ENCODE measurements at regions of chr7 and their contacts with region 1.

Region 1: DNA sequence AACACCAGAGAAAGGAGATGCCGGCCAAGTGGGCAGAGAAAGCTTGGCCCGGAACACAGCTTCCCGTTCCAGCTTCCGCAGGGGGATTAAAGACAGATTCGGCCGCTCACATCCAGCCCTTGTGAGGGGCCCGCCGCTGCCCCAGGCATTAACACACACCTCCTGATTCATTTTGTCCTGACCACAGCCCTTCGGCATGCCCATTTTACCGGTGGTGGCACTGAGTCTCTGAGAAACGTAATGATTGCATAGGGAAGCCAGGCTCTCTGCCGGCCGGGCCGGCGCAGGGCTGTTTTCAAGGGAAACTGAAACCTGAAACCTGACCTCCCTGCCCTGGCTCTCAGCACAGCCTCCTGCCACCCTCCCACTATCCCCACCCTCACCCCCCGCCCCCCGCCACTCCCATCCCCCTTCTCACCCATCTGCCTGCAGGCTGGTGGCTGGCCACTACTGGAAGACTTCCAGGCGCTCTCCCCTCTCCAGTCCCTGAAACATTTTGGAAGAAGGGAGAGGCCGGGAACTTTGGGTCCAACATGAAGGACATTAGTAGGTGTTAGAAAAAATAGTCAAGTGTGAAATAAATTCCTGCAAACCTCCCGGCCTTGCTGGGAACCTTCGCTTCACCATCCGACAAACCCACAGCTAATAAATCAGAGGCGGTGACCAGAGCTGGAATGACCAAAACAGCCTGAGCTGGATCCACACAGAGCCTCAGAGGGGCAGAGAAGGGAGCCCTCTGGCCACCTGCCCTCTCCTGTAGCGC is 83.5 kb upstream of the CUX1 start:
- DNase-seq: no peak
- ATAC-seq: no peak
- H3K4me3 ChIP-seq: no peak overlapping the region
- H3K27ac ChIP-seq: peak overlapping the region in 1 of 2 experiments; percentile 57; a peak in 3 of 6 replicates
- H3K4me1 ChIP-seq: peaks cover 6% of the 10 kb centered on the region; the same call in 2 of the 3 replicates
- CTCF ChIP-seq: no peak
- EP300 ChIP-seq: no peak
- POLR2A ChIP-seq: no peak
- RAD21 ChIP-seq: no peak

Region 2: GRCh38 chr7:101717628-101718357 is 16.1 kb before region 1 on chr7:
- CTCF ChIA-PET with region 1: interaction called, 11 read pairs
- POLR2A ChIA-PET with region 1: no interaction called
- DNase-seq: no peak
- ATAC-seq: peak in 1 of 2 experiments; percentile 36; a peak in 3 of 6 replicates
- H3K4me3 ChIP-seq: no peak overlapping the region
- H3K27ac ChIP-seq: peak overlapping the region in 1 of 2 experiments; percentile 51; a peak in 3 of 6 replicates
- H3K4me1 ChIP-seq: no peaks in the 10 kb centered on the region
- CTCF ChIP-seq: no peak
- EP300 ChIP-seq: no peak
- POLR2A ChIP-seq: no peak
- RAD21 ChIP-seq: no peak

Region 3: GRCh38 chr7:101803197-101804087 is 69.5 kb after region 1 on chr7:
- CTCF ChIA-PET with region 1: no interaction called
- POLR2A ChIA-PET with region 1: no interaction called
- DNase-seq: no peak
- ATAC-seq: no peak
- H3K4me3 ChIP-seq: no peak overlapping the region
- H3K27ac ChIP-seq: no peak overlapping the region
- H3K4me1 ChIP-seq: 0 out of 3 replicates have a peak, but pooled peaks cover 4% of the 10 kb centered on the region
- CTCF ChIP-seq: no peak
- EP300 ChIP-seq: no peak
- POLR2A ChIP-seq: no peak
- RAD21 ChIP-seq: no peak

Region 4: DNA sequence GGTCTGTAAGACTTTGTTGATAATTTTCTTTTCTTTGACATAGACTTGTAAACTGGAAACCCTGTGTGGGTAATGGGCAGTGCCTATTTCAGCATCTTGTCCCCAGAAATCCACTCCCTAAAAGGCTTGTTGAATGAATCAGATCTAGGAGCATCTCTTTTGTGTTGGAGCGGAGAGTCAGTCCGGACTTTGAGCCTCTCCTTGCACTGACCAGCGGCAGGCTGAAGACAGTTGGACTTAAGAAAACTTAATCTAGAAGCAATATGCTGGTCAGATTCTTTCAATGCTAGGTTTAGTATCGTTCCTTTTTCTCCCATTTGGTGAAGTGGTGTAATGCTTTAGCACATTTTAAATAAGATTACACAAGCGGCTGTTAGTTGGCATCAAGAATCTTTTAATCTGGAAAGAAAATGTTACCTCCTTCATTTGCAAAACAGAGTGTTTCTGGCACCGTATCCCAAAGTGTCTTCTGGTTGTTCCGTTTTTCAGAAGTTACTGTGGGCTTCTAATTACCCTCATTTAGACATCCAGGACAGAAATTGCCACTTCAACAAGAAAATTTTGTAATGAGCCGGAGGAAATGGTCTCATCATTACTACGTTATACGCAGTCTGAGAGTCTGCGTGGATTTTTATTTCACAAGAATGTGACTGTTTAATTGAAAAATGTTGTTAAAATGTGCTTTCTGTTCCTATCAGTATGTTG is 158.2 kb after region 1 on chr7:
- CTCF ChIA-PET with region 1: no interaction called
- POLR2A ChIA-PET with region 1: no interaction called
- DNase-seq: peak in 1 of 2 experiments; percentile 74
- ATAC-seq: peak; percentile 69 to 77
- H3K4me3 ChIP-seq: no peak overlapping the region
- H3K27ac ChIP-seq: peak overlapping the region; percentile 38 to 93
- H3K4me1 ChIP-seq: peaks cover 52% of the 10 kb centered on the region
- CTCF ChIP-seq: no peak
- EP300 ChIP-seq: no peak
- POLR2A ChIP-seq: no peak
- RAD21 ChIP-seq: no peak

Region 5: DNA sequence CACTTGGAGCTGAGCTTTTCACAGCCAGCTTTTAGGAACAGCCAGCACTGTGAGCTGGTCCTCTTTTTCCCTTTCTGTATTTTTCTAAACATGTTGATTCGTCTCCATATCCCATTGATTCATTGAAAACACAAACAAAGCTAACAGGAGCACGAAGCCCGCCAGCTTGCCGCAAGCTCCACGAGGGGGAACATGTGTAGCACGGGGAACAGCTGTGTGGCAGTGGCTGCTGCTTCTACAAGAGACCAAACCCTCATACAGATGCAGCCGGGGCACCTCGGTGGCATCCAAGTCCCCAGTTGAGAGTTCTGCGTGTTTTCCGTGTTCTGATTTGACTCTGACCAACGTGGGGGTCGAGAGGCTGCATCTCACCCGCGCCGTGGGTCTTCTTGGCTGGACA is 472.0 kb after region 1 on chr7:
- CTCF ChIA-PET with region 1: no interaction called
- POLR2A ChIA-PET with region 1: no interaction called
- DNase-seq: no peak
- ATAC-seq: no peak
- H3K4me3 ChIP-seq: no peak overlapping the region
- H3K27ac ChIP-seq: no peak overlapping the region
- H3K4me1 ChIP-seq: no peaks in the 10 kb centered on the region
- CTCF ChIP-seq: no peak
- EP300 ChIP-seq: no peak
- POLR2A ChIP-seq: no peak
- RAD21 ChIP-seq: no peak

Region 6: DNA sequence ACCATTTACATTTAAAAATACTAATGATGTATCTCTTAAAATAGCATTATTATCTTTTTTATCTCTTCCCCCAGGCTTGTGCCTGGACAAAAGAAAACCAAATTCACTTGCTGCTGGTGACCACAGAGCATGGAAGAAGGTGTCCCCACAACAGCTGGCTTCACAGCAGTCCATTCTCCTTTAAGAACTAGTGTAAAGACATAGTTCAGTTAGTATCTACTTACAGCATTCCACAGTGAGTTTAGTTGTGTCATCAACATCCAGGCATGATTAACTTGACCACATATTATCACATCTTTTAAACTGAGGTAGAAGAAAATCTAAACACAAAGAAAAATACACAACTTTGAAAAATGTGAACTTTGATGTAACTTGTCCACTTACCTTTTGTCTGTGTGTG is 1233.9 kb after region 1 on chr7:
- CTCF ChIA-PET with region 1: no interaction called
- POLR2A ChIA-PET with region 1: no interaction called
- DNase-seq: no peak
- ATAC-seq: no peak
- H3K4me3 ChIP-seq: no peak overlapping the region
- H3K27ac ChIP-seq: no peak overlapping the region
- H3K4me1 ChIP-seq: no peaks in the 10 kb centered on the region
- CTCF ChIP-seq: no peak
- EP300 ChIP-seq: no peak
- POLR2A ChIP-seq: no peak
- RAD21 ChIP-seq: no peak